B cell (primary cell): ENCODE measurements at regions of chr19 and their contacts with region 1.

Region 1: GRCh38 chr19:5031231-5032100 is 62.6 kb downstream of the KDM4B start:
- DNase-seq: peak; percentile 83
- ATAC-seq: peak; percentile 89
- H3K4me3 ChIP-seq: no peak overlapping the region
- H3K4me3 Mint-ChIP-seq: no peak overlapping the region
- H3K27ac ChIP-seq: no peak overlapping the region
- H3K27ac Mint-ChIP-seq: peak overlapping the region; percentile 32
- H3K4me1 ChIP-seq: peaks cover 0 to 9% of the 10 kb centered on the region in 2 donors
- H3K4me1 Mint-ChIP-seq: peaks cover 18% of the 10 kb centered on the region
- H3K27me3 ChIP-seq: no peaks in the 10 kb centered on the region
- H3K27me3 Mint-ChIP-seq: no peaks in the 10 kb centered on the region
- CTCF ChIP-seq: peak; percentile 92

Region 2: GRCh38 chr19:4732680-4733114 is 298.8 kb before region 1 on chr19:
- CTCF ChIA-PET with region 1: interaction called, 6 read pairs
- POLR2A ChIA-PET with region 1: no interaction called
- intact Hi-C with region 1: loop called (anchors 5 kb)
- DNase-seq: peak; percentile 80
- ATAC-seq: peak; percentile 97
- H3K4me3 ChIP-seq: peak overlapping the region in 1 of 5 experiments; percentile 30
- H3K4me3 Mint-ChIP-seq: peak overlapping the region; percentile 54
- H3K27ac ChIP-seq: no peak overlapping the region
- H3K27ac Mint-ChIP-seq: no peak overlapping the region
- H3K4me1 ChIP-seq: peaks cover 3 to 6% of the 10 kb centered on the region in 2 donors
- H3K4me1 Mint-ChIP-seq: peaks cover 5% of the 10 kb centered on the region
- H3K27me3 ChIP-seq: peaks cover 0 to 5% (median 1%) of the 10 kb centered on the region in 4 experiments
- H3K27me3 Mint-ChIP-seq: peaks cover 7% of the 10 kb centered on the region
- CTCF ChIP-seq: peak; percentile 78

Region 3: GRCh38 chr19:4851551-4852290 is 179.7 kb before region 1 on chr19:
- CTCF ChIA-PET with region 1: interaction called, 12 read pairs
- POLR2A ChIA-PET with region 1: interaction called, 3 read pairs
- intact Hi-C with region 1: no loop called
- DNase-seq: peak; percentile 82
- ATAC-seq: peak; percentile 89
- H3K4me3 ChIP-seq: no peak overlapping the region
- H3K4me3 Mint-ChIP-seq: peak overlapping the region; percentile 35
- H3K27ac ChIP-seq: no peak overlapping the region
- H3K27ac Mint-ChIP-seq: no peak overlapping the region
- H3K4me1 ChIP-seq: peaks cover 0 to 13% of the 10 kb centered on the region in 2 donors
- H3K4me1 Mint-ChIP-seq: peaks cover 9% of the 10 kb centered on the region
- H3K27me3 ChIP-seq: no peaks in the 10 kb centered on the region
- H3K27me3 Mint-ChIP-seq: no peaks in the 10 kb centered on the region
- CTCF ChIP-seq: peak; percentile 85

Region 4: GRCh38 chr19:4867534-4868285 is 163.8 kb before region 1 on chr19 and contains the start of gene PLIN3:
- CTCF ChIA-PET with region 1: interaction called, 180 read pairs
- POLR2A ChIA-PET with region 1: interaction called, 6 read pairs
- intact Hi-C with region 1: no loop called
- DNase-seq: peak; percentile 94
- ATAC-seq: peak; percentile 95
- H3K4me3 ChIP-seq: peak within 1 kb of the TSS; percentile 66 to 87 (median 80)
- H3K4me3 Mint-ChIP-seq: peak within 1 kb of the TSS; percentile 88
- H3K27ac ChIP-seq: peak within 1 kb of the TSS; percentile 56 to 77
- H3K27ac Mint-ChIP-seq: peak within 1 kb of the TSS; percentile 82
- H3K4me1 ChIP-seq: peaks cover 6 to 28% of the 10 kb centered on the region in 2 donors
- H3K4me1 Mint-ChIP-seq: peaks cover 22% of the 10 kb centered on the region
- H3K27me3 ChIP-seq: no peaks in the 10 kb centered on the region
- H3K27me3 Mint-ChIP-seq: peaks cover 2% of the 10 kb centered on the region
- CTCF ChIP-seq: no peak
- total RNA-seq, gene PLIN3: 26.5 and 34.3 TPM in 2 replicates

Region 5: GRCh38 chr19:4909897-4910593 is 121.4 kb before region 1 on chr19:
- CTCF ChIA-PET with region 1: interaction called, 31 read pairs
- POLR2A ChIA-PET with region 1: no interaction called
- intact Hi-C with region 1: no loop called
- DNase-seq: peak; percentile 95
- ATAC-seq: peak; percentile 97
- H3K4me3 ChIP-seq: peak overlapping the region; percentile 40 to 73 (median 62)
- H3K4me3 Mint-ChIP-seq: peak overlapping the region; percentile 93
- H3K27ac ChIP-seq: no peak overlapping the region
- H3K27ac Mint-ChIP-seq: peak overlapping the region; percentile 59
- H3K4me1 ChIP-seq: peaks cover 48 to 57% of the 10 kb centered on the region in 2 donors
- H3K4me1 Mint-ChIP-seq: peaks cover 55% of the 10 kb centered on the region
- H3K27me3 ChIP-seq: peaks cover 0 to 3% (median 0%) of the 10 kb centered on the region in 4 experiments
- H3K27me3 Mint-ChIP-seq: no peaks in the 10 kb centered on the region
- CTCF ChIP-seq: no peak

Region 6: DNA sequence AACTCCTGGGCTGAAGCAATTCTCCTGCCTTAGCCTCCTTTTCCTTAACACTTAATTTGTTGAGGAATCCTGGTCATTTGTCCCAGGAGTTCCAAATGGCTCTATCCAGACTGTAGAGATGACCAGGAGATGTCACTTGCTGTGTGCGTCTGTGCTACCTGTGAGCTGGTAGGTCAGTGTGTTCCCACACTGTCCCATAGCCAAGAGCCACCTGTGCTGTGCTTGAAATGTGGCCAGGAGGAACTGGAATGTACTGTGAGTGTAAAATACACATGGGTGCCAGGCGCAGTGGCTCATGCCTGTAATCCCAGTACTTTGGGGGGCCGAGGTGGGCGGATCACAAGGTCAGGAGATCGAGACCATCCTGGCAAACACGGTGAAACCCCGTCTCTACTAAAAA is 92.0 kb before region 1 on chr19:
- CTCF ChIA-PET with region 1: interaction called, 11 read pairs
- POLR2A ChIA-PET with region 1: no interaction called
- intact Hi-C with region 1: no loop called
- DNase-seq: no peak
- ATAC-seq: no peak
- H3K4me3 ChIP-seq: no peak overlapping the region
- H3K4me3 Mint-ChIP-seq: no peak overlapping the region
- H3K27ac ChIP-seq: no peak overlapping the region
- H3K27ac Mint-ChIP-seq: no peak overlapping the region
- H3K4me1 ChIP-seq: no peaks in the 10 kb centered on the region
- H3K4me1 Mint-ChIP-seq: no peaks in the 10 kb centered on the region
- H3K27me3 ChIP-seq: no peaks in the 10 kb centered on the region
- H3K27me3 Mint-ChIP-seq: no peaks in the 10 kb centered on the region
- CTCF ChIP-seq: no peak

Region 7: GRCh38 chr19:5001615-5002014 is 29.9 kb before region 1 on chr19:
- CTCF ChIA-PET with region 1: interaction called, 29 read pairs
- POLR2A ChIA-PET with region 1: no interaction called
- intact Hi-C with region 1: no loop called
- DNase-seq: peak; percentile 56
- ATAC-seq: peak; percentile 61
- H3K4me3 ChIP-seq: no peak overlapping the region
- H3K4me3 Mint-ChIP-seq: no peak overlapping the region
- H3K27ac ChIP-seq: no peak overlapping the region
- H3K27ac Mint-ChIP-seq: no peak overlapping the region
- H3K4me1 ChIP-seq: no peaks in the 10 kb centered on the region
- H3K4me1 Mint-ChIP-seq: peaks cover 13% of the 10 kb centered on the region
- H3K27me3 ChIP-seq: no peaks in the 10 kb centered on the region
- H3K27me3 Mint-ChIP-seq: no peaks in the 10 kb centered on the region
- CTCF ChIP-seq: peak; percentile 70

Region 8: GRCh38 chr19:5086725-5087439 is 55.4 kb after region 1 on chr19:
- CTCF ChIA-PET with region 1: no interaction called
- POLR2A ChIA-PET with region 1: no interaction called
- intact Hi-C with region 1: no loop called
- DNase-seq: no peak
- ATAC-seq: no peak
- H3K4me3 ChIP-seq: no peak overlapping the region
- H3K4me3 Mint-ChIP-seq: no peak overlapping the region
- H3K27ac ChIP-seq: no peak overlapping the region
- H3K27ac Mint-ChIP-seq: no peak overlapping the region
- H3K4me1 ChIP-seq: no peaks in the 10 kb centered on the region
- H3K4me1 Mint-ChIP-seq: peaks cover 3% of the 10 kb centered on the region
- H3K27me3 ChIP-seq: no peaks in the 10 kb centered on the region
- H3K27me3 Mint-ChIP-seq: no peaks in the 10 kb centered on the region
- CTCF ChIP-seq: no peak